CD4-positive, alpha-beta memory T cell (primary cell): ENCODE measurements at regions of chr20 and their contacts with region 1.

Region 1: GRCh38 chr20:63739130-63740069 is at the start of gene SLC2A4RG:
- DNase-seq: peak; percentile 61 to 76 (median 72)
- H3K4me3 ChIP-seq: peak within 1 kb of the TSS; percentile 42 to 92
- H3K4me3 Mint-ChIP-seq: peak within 1 kb of the TSS; percentile 44 to 91 (median 60)
- H3K27ac ChIP-seq: peak within 1 kb of the TSS; percentile 54
- H3K27ac Mint-ChIP-seq: peak within 1 kb of the TSS in 4 of 7 donors; percentile 22 to 65 (median 43)
- H3K4me1 ChIP-seq: peaks cover 33% of the 10 kb centered on the region
- H3K4me1 Mint-ChIP-seq: peaks cover 6 to 17% (median 10%) of the 10 kb centered on the region in 4 donors
- H3K27me3 ChIP-seq: no peaks in the 10 kb centered on the region
- H3K27me3 Mint-ChIP-seq: no peaks in the 10 kb centered on the region
- total RNA-seq, gene SLC2A4RG: 121 to 124 TPM

Region 2: DNA sequence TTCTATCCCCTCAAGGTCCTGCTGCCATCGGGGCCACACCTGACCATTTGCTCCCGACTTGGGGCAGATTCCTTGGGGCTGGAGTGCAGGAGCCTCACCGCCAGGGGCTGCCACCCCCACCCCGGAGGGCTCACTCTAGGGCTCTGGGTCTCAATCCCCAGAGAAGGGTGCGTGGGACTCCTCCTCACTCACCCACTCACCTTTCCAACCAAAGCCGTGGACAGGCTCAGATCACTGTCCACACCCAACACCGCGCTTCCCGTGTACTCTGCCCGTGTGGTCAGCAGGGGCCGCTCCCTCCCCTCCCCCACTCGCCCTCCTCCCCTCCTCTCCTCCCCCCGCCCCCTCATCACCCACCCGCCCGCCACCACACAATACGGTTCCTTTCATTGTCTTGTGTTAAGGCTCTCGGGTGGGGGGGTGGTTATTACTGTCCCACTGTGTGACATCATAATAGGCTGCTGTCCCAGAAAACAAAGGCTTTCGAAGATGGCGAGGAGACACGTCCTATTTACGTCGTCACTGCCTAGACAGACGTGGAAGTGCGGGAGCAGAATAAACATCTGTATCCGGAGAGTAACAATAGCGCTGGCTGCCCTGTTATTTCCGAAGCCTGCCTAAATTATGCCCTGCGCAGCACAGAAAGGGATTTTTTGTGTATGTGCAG is 609.3 kb before region 1 on chr20:
- CTCF ChIA-PET with region 1: no interaction called
- POLR2A ChIA-PET with region 1: no interaction called
- intact Hi-C with region 1: no loop called
- DNase-seq: no peak
- H3K4me3 ChIP-seq: no peak overlapping the region
- H3K4me3 Mint-ChIP-seq: no peak overlapping the region
- H3K27ac ChIP-seq: no peak overlapping the region
- H3K27ac Mint-ChIP-seq: no peak overlapping the region
- H3K4me1 ChIP-seq: no peaks in the 10 kb centered on the region
- H3K4me1 Mint-ChIP-seq: no peaks in the 10 kb centered on the region
- H3K27me3 ChIP-seq: no peaks in the 10 kb centered on the region
- H3K27me3 Mint-ChIP-seq: peaks cover 18 to 20% of the 10 kb centered on the region in 2 donors

Region 3: GRCh38 chr20:63553227-63553932 is 186.0 kb before region 1 on chr20:
- CTCF ChIA-PET with region 1: no interaction called
- POLR2A ChIA-PET with region 1: interaction called, 17 read pairs
- intact Hi-C with region 1: no loop called
- DNase-seq: peak; percentile 87 to 93 (median 89)
- H3K4me3 ChIP-seq: peak overlapping the region; percentile 23 to 66
- H3K4me3 Mint-ChIP-seq: peak overlapping the region; percentile 68 to 92 (median 76)
- H3K27ac ChIP-seq: peak overlapping the region; percentile 69
- H3K27ac Mint-ChIP-seq: peak overlapping the region; percentile 93 to 98 (median 97)
- H3K4me1 ChIP-seq: peaks cover 22% of the 10 kb centered on the region
- H3K4me1 Mint-ChIP-seq: peaks cover 5 to 27% (median 14%) of the 10 kb centered on the region in 4 donors
- H3K27me3 ChIP-seq: no peaks in the 10 kb centered on the region
- H3K27me3 Mint-ChIP-seq: peaks cover 0 to 6% of the 10 kb centered on the region in 2 donors

Region 4: GRCh38 chr20:63635431-63636141 is 103.8 kb before region 1 on chr20:
- CTCF ChIA-PET with region 1: no interaction called
- POLR2A ChIA-PET with region 1: interaction called, 51 read pairs
- intact Hi-C with region 1: loop called (anchors 2 kb)
- DNase-seq: peak; percentile 87 to 95 (median 89)
- H3K4me3 ChIP-seq: peak overlapping the region in 1 of 2 donors; percentile 39
- H3K4me3 Mint-ChIP-seq: peak overlapping the region; percentile 80 to 93 (median 84)
- H3K27ac ChIP-seq: peak overlapping the region; percentile 72
- H3K27ac Mint-ChIP-seq: peak overlapping the region; percentile 98 to 100 (median 99)
- H3K4me1 ChIP-seq: peaks cover 79% of the 10 kb centered on the region
- H3K4me1 Mint-ChIP-seq: peaks cover 32 to 79% (median 55%) of the 10 kb centered on the region in 4 donors
- H3K27me3 ChIP-seq: no peaks in the 10 kb centered on the region
- H3K27me3 Mint-ChIP-seq: peaks cover 0 to 2% of the 10 kb centered on the region in 2 donors

Region 5: DNA sequence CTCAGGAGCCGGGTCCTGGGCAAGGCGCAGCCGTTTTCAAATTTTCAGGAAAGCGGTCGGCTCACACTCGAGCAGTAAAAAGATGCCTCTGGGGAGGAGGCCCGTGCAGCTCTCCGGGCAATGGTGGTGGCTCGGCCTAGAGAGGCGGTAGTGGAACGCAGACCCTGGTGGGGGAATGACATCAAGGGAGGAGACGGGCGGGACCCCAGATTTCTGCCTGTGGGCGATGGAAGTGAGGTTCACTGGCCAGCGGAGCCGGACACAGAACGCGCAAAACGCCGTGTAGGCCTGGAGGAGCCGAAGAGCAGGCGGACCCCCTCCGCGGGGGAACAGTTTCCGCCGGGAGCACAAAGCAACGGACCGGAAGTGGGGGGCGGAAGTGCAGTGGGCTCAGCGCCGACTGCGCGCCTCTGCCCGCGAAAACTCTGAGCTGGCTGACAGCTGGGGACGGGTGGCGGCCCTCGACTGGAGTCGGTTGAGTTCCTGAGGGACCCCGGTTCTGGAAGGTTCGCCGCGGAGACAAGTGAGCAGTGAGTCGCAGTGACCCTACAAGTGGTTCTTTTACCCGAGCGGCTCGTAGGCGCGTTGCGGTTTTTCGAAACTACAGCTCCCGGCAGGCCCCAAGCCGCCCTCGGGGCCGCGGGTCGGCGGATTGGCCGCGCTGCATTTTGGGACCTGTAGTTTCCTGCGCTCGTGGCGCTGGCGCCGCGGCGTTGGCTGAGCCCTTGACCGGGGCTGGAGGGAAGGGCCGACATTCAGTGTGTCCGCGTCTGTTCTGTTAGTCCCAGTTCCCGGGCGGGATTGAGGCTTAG is 81.3 kb before region 1 on chr20 and contains the start of gene RTEL1:
- CTCF ChIA-PET with region 1: interaction called, 4 read pairs
- POLR2A ChIA-PET with region 1: interaction called, 9 read pairs
- intact Hi-C with region 1: loop called (anchors 2 kb)
- DNase-seq: peak; percentile 86 to 93 (median 88)
- H3K4me3 ChIP-seq: peak within 1 kb of the TSS; percentile 91 to 97
- H3K4me3 Mint-ChIP-seq: peak within 1 kb of the TSS; percentile 92 to 98 (median 96)
- H3K27ac ChIP-seq: peak within 1 kb of the TSS; percentile 75
- H3K27ac Mint-ChIP-seq: peak within 1 kb of the TSS; percentile 94 to 98 (median 96)
- H3K4me1 ChIP-seq: peaks cover 42% of the 10 kb centered on the region
- H3K4me1 Mint-ChIP-seq: peaks cover 17 to 48% (median 24%) of the 10 kb centered on the region in 4 donors
- H3K27me3 ChIP-seq: no peaks in the 10 kb centered on the region
- H3K27me3 Mint-ChIP-seq: no peaks in the 10 kb centered on the region
- total RNA-seq, gene RTEL1: 30.9 to 36.0 TPM

Region 6: GRCh38 chr20:63707549-63708300 is 31.7 kb before region 1 on chr20 and contains the starts of genes ARFRP1 and ZGPAT:
- CTCF ChIA-PET with region 1: interaction called, 26 read pairs
- POLR2A ChIA-PET with region 1: interaction called, 202 read pairs
- intact Hi-C with region 1: loop called (anchors 1 kb)
- DNase-seq: peak; percentile 85 to 91 (median 86)
- H3K4me3 ChIP-seq: peak within 1 kb of the TSS; percentile 57 to 87
- H3K4me3 Mint-ChIP-seq: peak within 1 kb of the TSS; percentile 86 to 95 (median 90)
- H3K27ac ChIP-seq: peak within 1 kb of the TSS; percentile 65
- H3K27ac Mint-ChIP-seq: peak within 1 kb of the TSS; percentile 86 to 95 (median 90)
- H3K4me1 ChIP-seq: peaks cover 52% of the 10 kb centered on the region
- H3K4me1 Mint-ChIP-seq: peaks cover 24 to 61% (median 38%) of the 10 kb centered on the region in 4 donors
- H3K27me3 ChIP-seq: no peaks in the 10 kb centered on the region
- H3K27me3 Mint-ChIP-seq: no peaks in the 10 kb centered on the region
- total RNA-seq, gene ARFRP1: 85.6 to 92.0 TPM
- total RNA-seq, gene ZGPAT: 51.8 to 55.3 TPM

Region 7: GRCh38 chr20:63750807-63751470 is 11.5 kb after region 1 on chr20:
- CTCF ChIA-PET with region 1: interaction called, 9 read pairs
- POLR2A ChIA-PET with region 1: interaction called, 98 read pairs
- intact Hi-C with region 1: loop called (anchors 1 kb)
- DNase-seq: peak; percentile 60 to 70 (median 68)
- H3K4me3 ChIP-seq: peak overlapping the region in 1 of 2 donors; percentile 60
- H3K4me3 Mint-ChIP-seq: peak overlapping the region; percentile 60 to 82 (median 78)
- H3K27ac ChIP-seq: peak overlapping the region; percentile 55
- H3K27ac Mint-ChIP-seq: peak overlapping the region; percentile 86 to 92 (median 91)
- H3K4me1 ChIP-seq: peaks cover 25% of the 10 kb centered on the region
- H3K4me1 Mint-ChIP-seq: peaks cover 9 to 35% (median 19%) of the 10 kb centered on the region in 4 donors
- H3K27me3 ChIP-seq: no peaks in the 10 kb centered on the region
- H3K27me3 Mint-ChIP-seq: no peaks in the 10 kb centered on the region

Region 8: DNA sequence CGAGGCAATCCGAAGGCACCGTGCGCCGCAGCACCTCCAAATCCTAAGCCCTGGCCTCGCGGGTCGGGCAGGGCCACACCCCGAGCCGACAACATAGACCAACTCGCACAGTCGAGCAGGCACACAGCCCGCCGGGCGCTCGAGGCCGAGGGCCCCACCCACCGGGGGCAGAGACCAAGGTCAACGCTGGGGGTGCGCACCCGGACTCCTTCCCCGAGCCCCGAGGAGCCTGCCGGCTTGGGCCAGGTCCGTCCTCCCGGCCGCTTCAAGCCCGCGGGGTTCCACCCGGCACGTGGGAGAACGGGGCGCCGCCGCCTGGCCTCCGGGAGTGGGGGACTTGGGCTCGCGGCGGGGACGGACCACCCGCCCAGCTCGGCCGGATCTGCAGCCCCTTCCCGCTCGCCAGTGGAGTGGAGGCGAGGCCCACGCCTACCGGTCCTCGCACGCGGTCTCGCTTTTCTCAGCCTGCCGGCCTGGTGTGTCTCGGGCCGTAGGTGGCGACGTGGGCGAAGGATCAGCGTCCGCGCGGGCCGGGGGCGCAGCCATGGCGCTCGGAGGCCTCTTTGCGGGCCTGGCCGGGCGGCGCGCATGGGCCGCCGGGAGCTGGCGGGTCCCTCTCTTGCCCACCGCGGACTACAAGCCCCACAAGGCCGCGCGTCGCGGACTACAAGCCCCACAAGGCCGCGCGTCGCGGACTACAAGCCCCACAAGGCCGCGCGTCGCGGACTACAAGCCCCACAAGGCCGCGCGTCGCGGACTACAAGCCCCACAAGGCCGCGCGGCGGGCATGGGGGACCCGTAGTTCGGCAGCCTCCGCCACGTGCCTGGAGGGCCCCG is 216.6 kb after region 1 on chr20 and contains the start of gene UCKL1:
- CTCF ChIA-PET with region 1: no interaction called
- POLR2A ChIA-PET with region 1: no interaction called
- intact Hi-C with region 1: loop called (anchors 5 kb)
- DNase-seq: peak; percentile 90 to 94 (median 93)
- H3K4me3 ChIP-seq: peak within 1 kb of the TSS; percentile 34 to 79
- H3K4me3 Mint-ChIP-seq: peak within 1 kb of the TSS; percentile 77 to 88 (median 86)
- H3K27ac ChIP-seq: peak within 1 kb of the TSS; percentile 87
- H3K27ac Mint-ChIP-seq: peak within 1 kb of the TSS; percentile 84 to 93 (median 87)
- H3K4me1 ChIP-seq: peaks cover 43% of the 10 kb centered on the region
- H3K4me1 Mint-ChIP-seq: peaks cover 10 to 47% (median 29%) of the 10 kb centered on the region in 4 donors
- H3K27me3 ChIP-seq: no peaks in the 10 kb centered on the region
- H3K27me3 Mint-ChIP-seq: no peaks in the 10 kb centered on the region
- total RNA-seq, gene UCKL1: 53.7 to 55.1 TPM